Activated T-helper 2 cell treated with anti-CD3 and anti-CD28 coated beads, Interferon-gamma antibody, Interleukin-2, Interleukin-4, amounts not matched to agents 10 μg/mL and 5 μg/mL and 100 μg/mL, durations not matched to agents 14 hours and 24 hours and 36 hours (primary cell): ENCODE measurements at regions of chr3 and their contacts with region 1.

Region 1: GRCh38 chr3:112379020-112379690 is 46.2 kb downstream of the CD200 start:
- DNase-seq: no peak
- H3K4me3 Mint-ChIP-seq: no peak overlapping the region
- H3K27ac Mint-ChIP-seq: peak overlapping the region; percentile 83
- H3K4me1 Mint-ChIP-seq: peaks cover 77% of the 10 kb centered on the region
- H3K27me3 Mint-ChIP-seq: no peaks in the 10 kb centered on the region

Region 2: DNA sequence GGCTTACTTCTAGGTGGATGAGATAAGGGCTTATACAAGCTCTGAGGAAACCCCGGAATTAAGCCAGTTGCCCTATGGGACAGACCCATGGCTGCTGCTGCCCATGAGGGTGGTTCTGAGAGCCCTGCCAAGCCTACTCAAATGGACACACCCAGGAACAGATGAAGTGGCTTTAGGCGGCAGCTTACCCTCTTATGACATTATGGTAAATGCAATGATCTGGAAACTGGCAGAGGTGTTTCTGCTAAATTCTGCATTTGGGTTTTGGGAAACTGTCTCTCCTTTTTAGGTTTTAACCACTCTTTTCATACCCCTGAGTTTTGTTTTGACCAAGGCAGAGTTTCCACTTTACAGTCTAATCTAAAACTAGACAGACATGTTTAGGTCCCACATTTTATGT is 775.0 kb before region 1 on chr3:
- intact Hi-C with region 1: loop called (anchors 10 kb)
- DNase-seq: no peak
- H3K4me3 Mint-ChIP-seq: peak overlapping the region; percentile 22
- H3K27ac Mint-ChIP-seq: peak overlapping the region; percentile 85
- H3K4me1 Mint-ChIP-seq: peaks cover 81% of the 10 kb centered on the region
- H3K27me3 Mint-ChIP-seq: no peaks in the 10 kb centered on the region

Region 3: GRCh38 chr3:112333381-112334317 is 45.5 kb before region 1 on chr3:
- intact Hi-C with region 1: loop called (anchors 1 kb)
- DNase-seq: peak; percentile 26
- H3K4me3 Mint-ChIP-seq: peak overlapping the region; percentile 90
- H3K27ac Mint-ChIP-seq: peak overlapping the region; percentile 85
- H3K4me1 Mint-ChIP-seq: peaks cover 48% of the 10 kb centered on the region
- H3K27me3 Mint-ChIP-seq: no peaks in the 10 kb centered on the region

Region 4: DNA sequence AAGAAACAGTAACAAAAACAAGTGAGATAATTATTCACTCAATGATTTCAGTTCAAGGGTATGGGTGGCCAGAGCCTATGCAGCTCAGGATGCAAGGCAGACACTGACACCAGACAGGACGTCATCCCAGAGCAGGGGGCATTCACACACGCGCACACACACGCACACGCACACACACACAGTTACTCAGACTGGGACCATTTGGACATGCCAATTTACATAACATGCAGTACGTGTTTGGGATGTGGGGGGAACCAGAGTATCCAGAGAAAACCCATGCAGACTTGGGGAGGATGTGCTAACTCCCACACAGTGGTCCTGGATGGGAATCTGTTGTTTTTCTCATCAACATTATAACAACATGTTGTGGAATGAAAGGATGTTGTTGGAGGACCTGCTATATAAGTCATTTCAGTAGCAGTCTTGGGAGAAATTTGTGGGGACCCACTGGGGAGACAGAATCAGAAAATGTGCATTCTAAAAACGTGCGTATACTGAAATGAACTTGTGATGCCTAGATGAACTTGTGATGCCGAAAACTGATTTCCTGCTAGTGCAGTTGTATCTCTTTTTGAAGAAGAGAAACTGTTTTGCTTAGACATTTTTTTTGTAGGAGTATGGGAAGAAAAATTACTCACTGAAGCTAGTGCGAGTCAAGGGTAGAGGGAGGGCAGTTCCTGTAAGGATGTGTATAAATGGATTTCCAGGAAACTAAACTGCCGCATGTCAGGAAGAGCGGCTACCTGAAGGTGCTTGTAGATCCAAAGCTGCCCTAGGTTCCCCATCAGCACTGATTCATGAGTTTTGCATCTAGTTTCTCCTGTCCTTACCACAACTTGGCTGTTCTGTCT is 21.0 kb before region 1 on chr3:
- intact Hi-C with region 1: loop called (anchors 2 kb)
- DNase-seq: no peak
- H3K4me3 Mint-ChIP-seq: peak overlapping the region; percentile 70
- H3K27ac Mint-ChIP-seq: peak overlapping the region; percentile 91
- H3K4me1 Mint-ChIP-seq: peaks cover 38% of the 10 kb centered on the region
- H3K27me3 Mint-ChIP-seq: no peaks in the 10 kb centered on the region

Region 5: DNA sequence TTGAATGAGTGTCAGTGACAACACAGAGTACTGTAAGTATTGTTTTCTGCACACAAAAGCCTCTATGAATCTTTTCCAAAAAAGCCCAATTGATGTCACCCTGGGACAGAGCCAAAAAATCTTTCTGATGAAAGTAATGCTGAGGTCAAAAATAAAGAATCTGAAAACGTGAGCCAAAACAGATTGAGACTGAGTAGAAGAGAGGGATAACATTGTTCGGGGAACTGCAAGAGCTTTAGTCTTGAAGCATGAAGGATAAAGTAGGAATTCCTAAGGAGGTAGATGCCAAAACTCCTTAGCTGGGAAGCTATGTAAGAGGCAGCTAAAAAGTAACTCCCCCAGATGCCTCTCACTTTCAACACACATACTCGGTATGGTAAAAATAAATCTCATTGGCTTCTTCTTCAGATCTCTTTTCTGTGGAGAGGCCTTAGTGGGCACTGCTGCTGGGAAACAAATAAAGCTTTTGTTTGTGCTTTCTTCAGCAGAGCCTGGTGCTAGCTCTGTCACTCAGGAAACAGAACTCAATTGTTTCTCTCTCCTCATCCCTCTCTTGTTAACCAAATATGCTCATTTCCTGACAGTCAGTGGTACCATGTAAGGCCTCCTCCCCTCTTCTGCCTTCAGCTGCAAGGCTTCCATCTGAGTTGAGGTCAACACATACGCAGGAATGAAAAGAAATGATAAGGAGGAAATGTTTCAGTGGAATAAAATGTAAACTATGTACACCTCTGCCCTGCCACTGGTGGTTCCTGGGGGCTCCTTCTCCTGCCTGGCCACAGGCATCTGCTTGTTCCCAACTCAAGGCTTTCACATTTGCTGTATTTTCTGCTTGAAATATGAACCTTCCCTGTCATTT is 11.9 kb after region 1 on chr3:
- intact Hi-C with region 1: loop called (anchors 1 kb)
- DNase-seq: no peak
- H3K4me3 Mint-ChIP-seq: no peak overlapping the region
- H3K27ac Mint-ChIP-seq: peak overlapping the region; percentile 65
- H3K4me1 Mint-ChIP-seq: peaks cover 58% of the 10 kb centered on the region
- H3K27me3 Mint-ChIP-seq: no peaks in the 10 kb centered on the region

Region 6: DNA sequence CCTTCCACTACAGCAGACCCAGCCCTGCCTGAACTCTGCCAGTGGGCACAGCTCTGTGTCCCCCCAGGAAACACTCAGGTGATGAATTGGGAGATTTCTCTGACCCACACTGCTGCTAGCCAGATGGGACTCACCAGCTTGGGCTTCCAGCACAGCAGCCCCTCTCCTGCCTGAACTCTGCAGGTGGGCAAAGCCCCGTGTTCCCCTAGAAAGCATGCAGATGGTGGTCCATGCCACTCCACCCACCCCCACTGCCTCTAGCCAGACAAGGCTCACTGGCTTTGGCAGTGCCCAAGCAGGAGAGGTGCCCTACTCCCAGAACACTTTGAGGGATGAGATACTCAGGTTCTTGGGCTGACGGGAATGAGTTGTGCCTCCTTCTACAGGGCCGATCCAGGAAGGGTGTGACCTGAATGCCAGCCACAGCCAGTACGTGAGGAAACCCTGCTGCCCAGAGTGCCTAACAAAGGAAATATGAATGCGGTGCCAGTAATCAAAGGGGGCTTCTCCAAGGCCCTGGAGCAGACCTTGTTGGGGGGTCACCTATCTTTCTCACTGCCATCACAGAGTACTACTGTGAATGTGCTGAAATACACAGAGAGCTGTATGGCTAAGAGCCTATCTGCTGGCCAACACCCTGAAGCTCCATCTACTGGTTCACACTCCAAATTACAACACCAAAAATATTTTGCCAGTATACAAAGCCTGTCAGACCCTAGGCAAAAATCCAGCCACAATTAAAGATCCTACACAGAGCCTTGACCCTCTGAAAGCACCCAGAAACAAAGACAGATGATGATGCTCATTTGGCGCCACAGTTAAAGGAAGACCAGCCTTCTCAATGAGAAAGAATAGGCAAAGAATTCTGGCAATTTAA is 58.2 kb after region 1 on chr3:
- intact Hi-C with region 1: loop called (anchors 2 kb)
- DNase-seq: no peak
- H3K4me3 Mint-ChIP-seq: no peak overlapping the region
- H3K27ac Mint-ChIP-seq: no peak overlapping the region
- H3K4me1 Mint-ChIP-seq: peaks cover 54% of the 10 kb centered on the region
- H3K27me3 Mint-ChIP-seq: no peaks in the 10 kb centered on the region

Region 7: GRCh38 chr3:112489674-112490479 is 110.7 kb after region 1 on chr3:
- intact Hi-C with region 1: loop called (anchors 2 kb)
- DNase-seq: no peak
- H3K4me3 Mint-ChIP-seq: peak overlapping the region; percentile 70
- H3K27ac Mint-ChIP-seq: peak overlapping the region; percentile 92
- H3K4me1 Mint-ChIP-seq: peaks cover 59% of the 10 kb centered on the region
- H3K27me3 Mint-ChIP-seq: no peaks in the 10 kb centered on the region